Common myeloid progenitor, CD34-positive (primary cell): ENCODE measurements at regions of chr10 and their contacts with region 1.

Region 1: GRCh38 chr10:102917962-102918816 is at the start of gene CNNM2:
- DNase-seq: peak; percentile 100
- H3K4me3 ChIP-seq: peak within 1 kb of the TSS; percentile 83 to 96 (median 90)
- H3K27ac ChIP-seq: peak within 1 kb of the TSS; percentile 68 to 87
- H3K4me1 ChIP-seq: peaks cover 4 to 30% (median 24%) of the 10 kb centered on the region in 4 experiments
- H3K27me3 ChIP-seq: peaks cover 0 to 5% (median 3%) of the 10 kb centered on the region in 5 experiments

Region 2: DNA sequence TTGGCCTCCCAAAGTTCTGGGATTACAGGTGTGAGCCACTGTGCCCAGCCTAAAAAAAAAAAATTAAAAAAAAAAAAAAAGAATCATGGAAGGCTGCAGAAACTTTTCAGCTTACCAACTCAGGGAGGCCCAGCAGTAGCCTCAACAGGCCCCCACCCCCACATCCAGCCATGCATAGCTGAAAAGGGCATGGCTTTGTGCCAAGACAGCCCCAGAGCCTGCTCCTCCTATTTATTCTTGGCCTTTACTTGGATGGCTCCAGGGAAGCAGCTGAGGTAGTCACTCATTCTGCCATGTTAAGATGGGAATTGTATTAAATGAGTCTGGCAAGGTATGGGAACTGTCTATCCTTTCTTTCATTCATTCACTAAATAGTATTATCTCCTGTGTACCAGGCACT is 13.8 kb before region 1 on chr10:
- CTCF ChIA-PET with region 1: interaction called, 32 read pairs
- POLR2A ChIA-PET with region 1: no interaction called
- DNase-seq: no peak
- H3K4me3 ChIP-seq: no peak overlapping the region
- H3K27ac ChIP-seq: no peak overlapping the region
- H3K4me1 ChIP-seq: peaks cover 0 to 11% (median 3%) of the 10 kb centered on the region in 4 experiments
- H3K27me3 ChIP-seq: no peaks in the 10 kb centered on the region

Region 3: GRCh38 chr10:103040418-103040817 is 122.2 kb after region 1 on chr10:
- CTCF ChIA-PET with region 1: no interaction called
- POLR2A ChIA-PET with region 1: no interaction called
- DNase-seq: no peak
- H3K4me3 ChIP-seq: no peak overlapping the region
- H3K27ac ChIP-seq: no peak overlapping the region
- H3K4me1 ChIP-seq: no peaks in the 10 kb centered on the region
- H3K27me3 ChIP-seq: no peaks in the 10 kb centered on the region

Region 4: DNA sequence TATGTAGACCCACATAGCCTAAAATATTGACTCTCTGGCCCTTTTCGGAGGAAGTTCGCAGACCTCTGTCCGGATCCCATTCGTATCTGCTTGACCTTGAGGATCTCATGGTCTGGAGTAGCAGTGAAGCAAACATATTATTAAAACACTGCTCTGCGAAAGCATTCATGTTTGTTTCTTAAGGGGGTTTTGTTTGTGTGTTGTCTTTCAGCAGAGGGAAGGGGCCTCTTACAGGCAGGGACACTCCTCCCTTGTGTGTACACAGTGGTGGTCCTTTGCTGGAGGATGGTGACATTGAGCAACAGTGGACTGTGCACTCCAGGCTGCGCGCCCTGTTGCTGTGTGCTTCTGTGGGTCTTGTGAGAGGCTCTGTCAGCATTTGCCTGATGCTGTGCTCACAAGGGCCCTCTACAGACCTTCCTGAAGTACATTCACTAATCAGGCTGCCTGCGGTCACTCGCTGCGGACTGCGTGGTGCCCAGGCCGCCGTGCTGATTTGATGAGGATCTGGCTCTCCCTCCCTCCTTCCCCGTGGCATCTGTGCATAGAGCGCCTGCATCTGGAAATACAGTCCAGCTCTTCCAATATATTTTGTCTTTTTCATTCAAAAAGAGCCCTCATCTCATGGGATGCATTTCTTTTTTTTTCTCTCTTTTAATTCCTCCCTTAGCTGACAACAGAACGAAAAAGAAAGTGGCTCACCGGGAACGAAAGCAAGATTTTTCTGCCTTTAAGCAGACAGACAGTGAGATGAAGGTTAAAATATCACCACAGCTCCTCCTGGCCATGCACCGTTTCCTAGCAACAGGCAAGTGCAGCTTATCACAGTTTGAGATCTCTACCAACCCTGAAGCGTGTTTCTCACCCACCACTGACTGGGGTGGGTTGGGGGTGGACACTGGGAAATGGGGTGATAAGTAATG is 135.7 kb after region 1 on chr10:
- CTCF ChIA-PET with region 1: interaction called, 14 read pairs
- POLR2A ChIA-PET with region 1: no interaction called
- DNase-seq: peak; percentile 38 to 74 (median 67)
- H3K4me3 ChIP-seq: peak overlapping the region in 6 of 7 experiments; percentile 37 to 71 (median 56)
- H3K27ac ChIP-seq: no peak overlapping the region
- H3K4me1 ChIP-seq: peaks cover 0 to 8% (median 5%) of the 10 kb centered on the region in 4 experiments
- H3K27me3 ChIP-seq: no peaks in the 10 kb centered on the region

Region 5: GRCh38 chr10:103069453-103070331 is 151.5 kb after region 1 on chr10:
- CTCF ChIA-PET with region 1: interaction called, 161 read pairs
- POLR2A ChIA-PET with region 1: no interaction called
- DNase-seq: peak; percentile 64 to 83 (median 79)
- H3K4me3 ChIP-seq: peak overlapping the region in 2 of 7 experiments; percentile 3 to 25
- H3K27ac ChIP-seq: no peak overlapping the region
- H3K4me1 ChIP-seq: peaks cover 6 to 18% (median 17%) of the 10 kb centered on the region in 4 experiments
- H3K27me3 ChIP-seq: no peaks in the 10 kb centered on the region

Region 6: GRCh38 chr10:103307594-103307993 is 389.4 kb after region 1 on chr10:
- CTCF ChIA-PET with region 1: no interaction called
- POLR2A ChIA-PET with region 1: no interaction called
- DNase-seq: no peak
- H3K4me3 ChIP-seq: no peak overlapping the region
- H3K27ac ChIP-seq: no peak overlapping the region
- H3K4me1 ChIP-seq: no peaks in the 10 kb centered on the region
- H3K27me3 ChIP-seq: no peaks in the 10 kb centered on the region